Activated CD4-positive, alpha-beta T cell treated with anti-CD3 and anti-CD28 coated beads for 36 hours (primary cell): ENCODE measurements at regions of chr19 and their contacts with region 1.

Region 1: GRCh38 chr19:7098701-7099596 is 29.4 kb downstream of the ZNF557 start:
- DNase-seq: peak; percentile 94
- ATAC-seq: peak; percentile 95
- H3K4me3 Mint-ChIP-seq: peak overlapping the region; percentile 90
- H3K27ac Mint-ChIP-seq: peak overlapping the region; percentile 92
- H3K4me1 Mint-ChIP-seq: peaks cover 27% of the 10 kb centered on the region
- H3K27me3 Mint-ChIP-seq: no peaks in the 10 kb centered on the region

Region 2: DNA sequence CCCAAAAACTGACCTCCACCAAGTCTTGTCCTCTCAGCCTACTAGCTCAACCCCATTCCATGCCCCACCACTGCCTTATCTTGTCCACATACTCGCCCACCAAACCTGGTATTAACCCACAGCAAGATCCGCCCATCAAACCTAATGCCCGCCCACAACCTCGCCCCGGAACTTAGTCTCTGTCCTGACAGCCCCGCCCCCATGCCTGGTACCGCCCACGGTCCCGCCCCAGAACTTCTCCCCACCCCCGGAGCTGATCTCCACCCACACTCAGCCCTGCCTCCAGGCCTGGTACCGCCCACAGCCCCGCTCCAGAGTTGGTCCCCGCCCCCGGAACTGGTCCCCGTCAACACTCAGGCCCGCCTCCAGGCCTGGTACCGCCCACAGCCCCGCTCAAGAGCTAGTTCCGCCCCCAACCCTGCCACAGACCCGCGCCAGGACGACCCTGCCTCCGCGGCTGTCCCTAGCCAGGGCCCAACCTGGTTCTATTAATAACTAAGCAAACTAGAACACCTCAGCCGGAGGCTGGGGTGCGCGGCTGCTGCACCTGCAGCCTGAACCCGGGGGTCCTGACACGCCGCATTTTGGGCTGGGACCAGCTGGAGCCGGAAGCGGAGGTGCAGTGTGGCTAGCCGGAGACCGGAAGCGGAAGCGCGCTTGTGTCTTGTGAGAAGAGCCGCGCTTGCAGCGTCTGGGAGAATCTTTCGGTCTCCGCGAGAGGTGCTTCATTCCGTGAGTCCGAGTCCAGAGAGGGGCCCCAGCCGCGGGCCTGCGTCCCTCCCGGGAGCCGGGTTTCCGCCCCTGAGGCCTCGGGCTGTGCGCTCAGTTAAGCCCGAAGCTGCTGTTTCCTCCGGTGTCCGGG is 29.7 kb before region 1 on chr19 and contains the start of gene ZNF557:
- CTCF ChIA-PET with region 1: interaction called, 6 read pairs
- POLR2A ChIA-PET with region 1: interaction called, 8 read pairs
- intact Hi-C with region 1: loop called in 1 of 2 experiments (anchors 1 kb)
- DNase-seq: peak; percentile 100
- ATAC-seq: peak; percentile 96
- H3K4me3 Mint-ChIP-seq: peak within 1 kb of the TSS; percentile 90
- H3K27ac Mint-ChIP-seq: peak within 1 kb of the TSS; percentile 77
- H3K4me1 Mint-ChIP-seq: peaks cover 17% of the 10 kb centered on the region
- H3K27me3 Mint-ChIP-seq: no peaks in the 10 kb centered on the region
- total RNA-seq, gene ZNF557: 8.9 to 9.6 TPM

Region 3: GRCh38 chr19:7340959-7341837 is 242.2 kb after region 1 on chr19:
- CTCF ChIA-PET with region 1: interaction called, 20 read pairs
- POLR2A ChIA-PET with region 1: interaction called, 3 read pairs
- intact Hi-C with region 1: loop called (anchors 1 kb)
- DNase-seq: peak; percentile 91
- ATAC-seq: peak; percentile 18
- H3K4me3 Mint-ChIP-seq: peak overlapping the region; percentile 3
- H3K27ac Mint-ChIP-seq: peak overlapping the region; percentile 63
- H3K4me1 Mint-ChIP-seq: peaks cover 54% of the 10 kb centered on the region
- H3K27me3 Mint-ChIP-seq: no peaks in the 10 kb centered on the region

Region 4: DNA sequence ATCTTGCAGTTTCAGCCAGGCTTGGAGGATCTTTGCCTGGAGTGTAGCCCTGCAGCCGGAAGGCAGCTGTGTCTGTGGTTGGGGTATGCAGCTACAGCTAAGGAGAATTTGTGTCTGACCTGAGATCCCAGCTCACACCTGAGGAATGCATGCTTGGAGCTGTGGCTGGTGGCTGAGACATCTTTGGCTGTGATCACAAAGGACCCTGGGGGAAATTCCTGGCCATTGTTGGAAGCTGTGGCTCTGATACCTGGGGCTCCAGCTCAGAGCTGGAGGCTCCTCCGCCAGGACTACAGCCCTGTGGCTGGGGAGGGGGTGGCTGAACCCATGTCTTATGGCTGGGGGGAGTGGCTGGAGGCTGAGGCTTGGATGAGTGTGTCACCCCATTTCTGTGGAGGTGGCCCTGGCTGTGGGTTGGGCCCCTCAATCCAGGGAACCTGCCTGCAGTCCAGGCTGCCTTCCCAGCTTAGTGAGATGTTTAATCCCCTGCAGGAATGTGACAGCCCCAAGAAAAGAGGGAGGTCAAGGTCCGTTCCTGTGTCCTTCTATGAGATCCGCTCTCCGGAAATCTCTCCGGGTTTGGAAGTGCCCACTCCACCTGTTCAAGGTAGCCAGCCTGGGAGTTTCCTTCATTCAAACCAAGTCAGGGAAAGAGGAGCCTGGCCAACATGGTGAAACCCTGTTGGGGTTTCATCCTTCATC is 277.4 kb after region 1 on chr19:
- CTCF ChIA-PET with region 1: interaction called, 5 read pairs
- POLR2A ChIA-PET with region 1: no interaction called
- intact Hi-C with region 1: loop called in 1 of 2 experiments (anchors 1 kb)
- DNase-seq: no peak
- ATAC-seq: no peak
- H3K4me3 Mint-ChIP-seq: no peak overlapping the region
- H3K27ac Mint-ChIP-seq: no peak overlapping the region
- H3K4me1 Mint-ChIP-seq: no peaks in the 10 kb centered on the region
- H3K27me3 Mint-ChIP-seq: no peaks in the 10 kb centered on the region

Region 5: DNA sequence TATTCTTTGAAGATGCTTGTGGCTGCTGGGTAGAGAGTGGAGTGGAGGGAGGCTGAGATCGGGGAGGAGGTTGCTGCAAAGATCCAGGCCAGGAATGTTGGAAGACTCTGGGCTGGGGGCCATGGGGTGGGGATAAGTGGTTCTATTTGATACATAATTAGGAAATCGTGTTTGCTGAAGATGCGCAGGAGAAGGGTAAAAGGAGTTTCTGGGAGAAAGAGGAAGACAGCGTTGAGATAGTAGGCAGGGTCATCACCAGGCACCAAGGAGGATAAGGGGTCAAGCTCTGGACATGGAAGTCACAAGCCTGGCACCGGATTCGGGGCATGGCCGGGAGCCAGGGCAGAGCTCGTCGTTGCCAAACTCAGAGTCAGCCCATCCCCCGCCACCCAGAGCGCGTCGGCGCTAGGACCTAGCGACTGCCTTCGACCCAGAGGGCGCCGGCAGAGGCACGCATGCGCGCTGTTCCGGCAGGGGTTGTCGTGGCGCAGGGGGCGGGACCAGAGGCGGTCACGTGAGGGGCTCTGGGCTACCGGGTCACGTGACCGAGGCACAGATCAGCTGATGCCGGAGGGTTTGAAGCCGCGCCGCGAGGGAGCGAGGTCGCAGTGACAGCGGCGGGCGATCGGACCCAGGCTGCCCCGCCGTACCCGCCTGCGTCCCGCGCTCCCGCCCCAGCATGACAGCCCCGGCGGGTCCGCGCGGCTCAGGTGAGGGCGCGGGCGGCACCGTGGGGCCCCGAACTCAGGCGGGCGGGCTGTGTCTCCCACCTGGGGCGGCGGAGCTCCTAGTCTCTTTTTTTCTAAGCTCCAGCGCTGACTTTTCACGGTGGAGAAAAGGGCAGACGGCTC is 423.3 kb after region 1 on chr19 and contains the start of gene MCOLN1:
- CTCF ChIA-PET with region 1: no interaction called
- POLR2A ChIA-PET with region 1: interaction called, 3 read pairs
- intact Hi-C with region 1: loop called in 1 of 2 experiments (anchors 1 kb)
- DNase-seq: peak; percentile 100
- ATAC-seq: peak; percentile 96
- H3K4me3 Mint-ChIP-seq: peak within 1 kb of the TSS; percentile 61
- H3K27ac Mint-ChIP-seq: peak within 1 kb of the TSS; percentile 76
- H3K4me1 Mint-ChIP-seq: peaks cover 11% of the 10 kb centered on the region
- H3K27me3 Mint-ChIP-seq: no peaks in the 10 kb centered on the region
- total RNA-seq, gene MCOLN1: 6.7 to 7.7 TPM

Region 6: DNA sequence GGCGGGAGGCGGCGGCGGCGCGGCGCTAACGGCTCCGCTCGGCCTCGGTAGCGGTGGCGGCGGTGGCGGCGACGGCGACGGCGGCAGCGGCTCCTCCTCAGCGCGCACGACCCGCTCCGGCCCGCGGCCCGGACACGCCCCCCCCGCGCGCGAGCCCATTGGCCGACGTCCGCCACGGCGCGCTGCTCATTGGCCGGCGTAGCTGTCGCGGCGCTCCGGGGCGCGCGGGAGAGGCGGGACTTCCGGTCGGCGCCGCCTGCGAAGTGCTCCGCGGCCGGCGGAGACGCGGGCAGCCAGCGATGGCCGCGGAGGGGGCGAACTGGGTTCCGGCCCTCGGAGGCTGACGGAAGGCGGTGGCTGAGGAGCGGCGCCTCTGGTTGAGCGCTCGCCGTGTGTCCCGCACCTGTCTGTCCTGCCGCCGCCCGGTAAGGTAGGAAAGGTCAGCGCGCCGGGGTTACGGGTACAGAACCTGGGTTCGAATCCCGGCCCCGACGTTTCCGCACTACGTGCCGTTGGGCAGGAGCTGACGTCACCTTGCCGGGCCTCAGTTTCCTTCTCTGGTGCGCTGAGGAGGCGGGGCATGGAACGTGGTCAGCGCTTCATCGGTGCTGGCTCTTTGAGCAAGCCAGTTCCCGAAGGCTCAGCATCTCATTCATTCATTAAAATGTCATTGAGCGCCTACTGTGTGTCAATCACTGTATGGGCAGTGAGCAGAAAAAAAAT is 906.7 kb after region 1 on chr19 and contains the start of gene ELAVL1:
- CTCF ChIA-PET with region 1: no interaction called
- POLR2A ChIA-PET with region 1: no interaction called
- intact Hi-C with region 1: loop called in 1 of 2 experiments (anchors 1 kb)
- DNase-seq: peak; percentile 95
- ATAC-seq: peak; percentile 93
- H3K4me3 Mint-ChIP-seq: peak within 1 kb of the TSS; percentile 95
- H3K27ac Mint-ChIP-seq: peak within 1 kb of the TSS; percentile 94
- H3K4me1 Mint-ChIP-seq: peaks cover 36% of the 10 kb centered on the region
- H3K27me3 Mint-ChIP-seq: no peaks in the 10 kb centered on the region
- total RNA-seq, gene ELAVL1: 149 to 184 TPM